ENCODE measurements at regions of chr12 and their contacts with region 1.

Region 1: DNA sequence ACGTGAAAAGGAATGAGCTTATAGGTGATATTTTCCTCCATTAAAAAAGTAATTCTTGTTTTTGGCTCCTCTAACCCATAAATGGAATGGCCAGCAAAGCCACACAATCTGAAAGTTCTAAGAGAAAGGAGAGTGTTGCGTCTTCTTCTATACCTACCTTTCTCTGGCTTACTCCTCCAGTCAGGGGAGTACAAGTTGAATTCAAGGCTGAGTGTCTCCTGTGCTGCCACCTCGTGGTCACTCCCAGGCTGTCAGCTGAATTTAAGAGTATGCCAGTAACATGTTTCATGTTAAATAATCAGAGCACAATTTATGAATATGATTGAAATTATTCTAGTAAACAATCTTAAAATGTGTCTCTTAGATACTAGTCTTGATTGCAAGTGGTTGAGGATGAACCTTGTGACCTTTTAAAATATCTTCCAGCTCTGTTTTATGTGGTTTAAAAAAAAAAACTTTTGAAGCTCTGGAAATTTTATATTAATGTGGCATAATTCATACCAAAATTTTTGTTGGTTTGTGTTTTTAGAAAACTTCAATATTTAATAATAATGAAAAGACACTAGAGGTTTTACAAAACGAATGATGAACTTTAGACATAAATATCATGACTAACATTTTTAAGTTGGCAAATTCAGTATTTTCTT is 31.7 kb downstream of the PTHLH start:
- DNase-seq: peak; percentile 60 to 87 (median 64)
- ATAC-seq: peak; percentile 96
- H3K4me3 ChIP-seq: no peak overlapping the region
- H3K27ac ChIP-seq: no peak overlapping the region
- H3K4me1 ChIP-seq: no peaks in the 10 kb centered on the region
- H3K27me3 ChIP-seq: no peaks in the 10 kb centered on the region
- CTCF ChIP-seq: peak; percentile 86 to 90 (median 89)
- EP300 ChIP-seq: no peak
- POLR2A ChIP-seq: no peak
- RAD21 ChIP-seq: peak; percentile 90 to 93

Region 2: GRCh38 chr12:27840244-27840999 is 100.5 kb before region 1 on chr12:
- CTCF ChIA-PET with region 1: no interaction called
- POLR2A ChIA-PET with region 1: no interaction called
- in situ Hi-C with region 1: no loop called
- intact Hi-C with region 1: loop called (anchors 10 kb)
- DNase-seq: no peak
- ATAC-seq: no peak
- H3K4me3 ChIP-seq: no peak overlapping the region
- H3K27ac ChIP-seq: no peak overlapping the region
- H3K4me1 ChIP-seq: peaks cover 17 to 23% of the 10 kb centered on the region in 2 experiments; a peak in 4 of 5 replicates
- H3K27me3 ChIP-seq: no peaks in the 10 kb centered on the region
- CTCF ChIP-seq: peak in 2 of 3 experiments; percentile 8 to 42; a peak in 3 of 6 replicates
- EP300 ChIP-seq: no peak
- POLR2A ChIP-seq: no peak
- RAD21 ChIP-seq: peak; percentile 6 to 39; a peak in 1 of 4 replicates

Region 3: DNA sequence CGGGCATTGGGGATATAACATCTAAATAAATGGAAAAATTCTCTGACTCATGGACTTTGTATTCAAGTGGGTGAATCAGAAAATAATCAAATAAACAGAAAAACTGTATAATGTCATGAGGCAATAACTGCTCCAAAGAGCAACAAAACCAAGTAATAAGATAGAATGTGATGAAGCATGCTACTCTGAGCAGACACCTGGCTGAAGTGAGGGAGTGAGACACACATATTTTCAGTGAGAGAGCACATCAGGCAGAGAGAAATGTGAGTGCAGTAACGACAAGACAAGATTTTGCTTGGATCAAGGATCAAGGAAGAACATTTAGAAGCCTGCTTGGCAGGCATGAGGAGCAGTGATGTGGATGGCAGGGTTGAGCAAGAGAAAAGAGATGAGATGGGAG is 173.6 kb after region 1 on chr12:
- CTCF ChIA-PET with region 1: no interaction called
- POLR2A ChIA-PET with region 1: no interaction called
- in situ Hi-C with region 1: no loop called
- intact Hi-C with region 1: no loop called
- DNase-seq: no peak
- ATAC-seq: no peak
- H3K4me3 ChIP-seq: no peak overlapping the region
- H3K27ac ChIP-seq: no peak overlapping the region
- H3K4me1 ChIP-seq: peaks cover 0 to 6% of the 10 kb centered on the region in 2 experiments; a peak in 2 of 5 replicates
- H3K27me3 ChIP-seq: no peaks in the 10 kb centered on the region
- CTCF ChIP-seq: no peak
- EP300 ChIP-seq: no peak
- POLR2A ChIP-seq: no peak
- RAD21 ChIP-seq: no peak

Measured in K562 (cell line).